Activated CD4-positive, alpha-beta memory T cell treated with anti-CD3 and anti-CD28 coated beads, Interleukin-2, amount 10 ng/mL, durations not matched to agents 7 days and 5 days (primary cell): ENCODE measurements at regions of chr19 and their contacts with region 1.

Region 1: GRCh38 chr19:8654591-8655339 is 24.3 kb downstream of the NFILZ start:
- DNase-seq: peak; percentile 75
- H3K4me3 Mint-ChIP-seq: peak overlapping the region; percentile 38
- H3K27ac Mint-ChIP-seq: no peak overlapping the region
- H3K4me1 Mint-ChIP-seq: peaks cover 28% of the 10 kb centered on the region
- H3K27me3 Mint-ChIP-seq: peaks cover 5% of the 10 kb centered on the region

Region 2: GRCh38 chr19:8688930-8689329 is 34.2 kb after region 1 on chr19:
- CTCF ChIA-PET with region 1: interaction called, 77 read pairs
- POLR2A ChIA-PET with region 1: interaction called, 13 read pairs
- DNase-seq: no peak
- H3K4me3 Mint-ChIP-seq: no peak overlapping the region
- H3K27ac Mint-ChIP-seq: no peak overlapping the region
- H3K4me1 Mint-ChIP-seq: peaks cover 29% of the 10 kb centered on the region
- H3K27me3 Mint-ChIP-seq: peaks cover 30% of the 10 kb centered on the region

Region 3: GRCh38 chr19:8697671-8698432 is 43.1 kb after region 1 on chr19:
- CTCF ChIA-PET with region 1: interaction called, 77 read pairs
- POLR2A ChIA-PET with region 1: interaction called, 13 read pairs
- DNase-seq: peak; percentile 32
- H3K4me3 Mint-ChIP-seq: no peak overlapping the region
- H3K27ac Mint-ChIP-seq: no peak overlapping the region
- H3K4me1 Mint-ChIP-seq: peaks cover 64% of the 10 kb centered on the region
- H3K27me3 Mint-ChIP-seq: peaks cover 6% of the 10 kb centered on the region